Activated CD8-positive, alpha-beta T cell treated with anti-CD3 and anti-CD28 coated beads, Interleukin-2, amount 10 ng/mL, durations not matched to agents 7 days and 5 days (primary cell): ENCODE measurements at regions of chr3 and their contacts with region 1.

Region 1: DNA sequence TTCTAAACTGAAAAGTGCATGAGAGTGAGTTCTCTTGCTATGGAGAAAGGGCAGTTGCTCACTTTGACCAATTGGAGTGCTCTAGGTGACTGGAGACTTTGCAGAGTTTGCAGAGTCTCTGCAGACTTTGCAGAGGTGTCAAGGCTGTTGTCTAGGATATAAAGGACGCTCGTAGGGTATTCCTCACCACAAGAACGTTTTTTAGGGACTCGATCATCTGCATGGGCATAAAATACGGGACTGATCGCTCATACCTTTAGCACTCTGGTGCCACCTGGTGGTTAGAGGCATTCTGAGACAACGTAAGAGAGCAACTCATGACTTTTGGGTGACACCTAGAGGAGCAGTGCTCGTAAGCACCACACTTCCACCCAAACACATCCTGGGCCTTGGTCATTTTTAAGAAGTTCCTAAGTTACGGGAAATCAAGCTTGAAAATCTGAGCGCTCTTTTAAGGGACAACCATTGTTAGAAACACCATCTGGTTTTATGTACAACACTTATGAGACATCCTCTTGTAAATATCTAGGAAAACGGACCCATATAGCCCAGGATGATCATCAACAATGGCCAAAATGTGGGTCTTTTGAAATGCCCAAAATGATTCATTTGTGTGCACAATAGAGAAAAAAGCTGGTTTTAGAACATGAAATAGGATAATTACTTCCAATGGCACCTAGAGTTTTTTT is 51.6 kb upstream of the XCR1 start:
- DNase-seq: peak; percentile 95
- ATAC-seq: peak; percentile 99
- H3K4me3 Mint-ChIP-seq: peak overlapping the region; percentile 29
- H3K27ac Mint-ChIP-seq: peak overlapping the region; percentile 58
- H3K4me1 Mint-ChIP-seq: peaks cover 70% of the 10 kb centered on the region
- H3K27me3 Mint-ChIP-seq: no peaks in the 10 kb centered on the region

Region 2: DNA sequence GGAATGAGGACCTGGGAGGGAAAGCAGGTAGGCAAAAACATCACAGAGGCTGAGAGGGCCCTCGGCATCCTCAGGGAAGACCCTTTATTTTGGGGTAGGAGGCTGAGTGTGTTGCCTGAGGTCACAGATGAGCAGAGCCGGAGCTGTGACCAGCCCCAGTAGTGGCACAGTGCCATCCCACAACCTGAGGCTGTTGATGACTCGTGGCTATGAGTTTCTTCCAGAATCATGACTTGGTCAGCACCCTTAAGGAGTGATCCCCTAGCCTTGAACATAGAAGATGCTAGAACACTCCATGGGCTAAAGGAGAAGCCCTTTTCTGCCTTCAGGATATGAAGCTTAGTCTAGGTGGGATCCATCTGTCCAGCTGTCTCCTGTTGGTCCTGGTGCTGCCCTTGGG is 155.1 kb before region 1 on chr3:
- CTCF ChIA-PET with region 1: interaction called, 87 read pairs
- POLR2A ChIA-PET with region 1: no interaction called
- DNase-seq: no peak
- ATAC-seq: no peak
- H3K4me3 Mint-ChIP-seq: no peak overlapping the region
- H3K27ac Mint-ChIP-seq: no peak overlapping the region
- H3K4me1 Mint-ChIP-seq: peaks cover 14% of the 10 kb centered on the region
- H3K27me3 Mint-ChIP-seq: no peaks in the 10 kb centered on the region

Region 3: GRCh38 chr3:45958321-45958791 is 120.5 kb before region 1 on chr3:
- CTCF ChIA-PET with region 1: interaction called, 171 read pairs
- POLR2A ChIA-PET with region 1: no interaction called
- DNase-seq: no peak
- ATAC-seq: no peak
- H3K4me3 Mint-ChIP-seq: no peak overlapping the region
- H3K27ac Mint-ChIP-seq: peak overlapping the region; percentile 69
- H3K4me1 Mint-ChIP-seq: peaks cover 76% of the 10 kb centered on the region
- H3K27me3 Mint-ChIP-seq: no peaks in the 10 kb centered on the region

Region 4: GRCh38 chr3:46010519-46011113 is 68.2 kb before region 1 on chr3:
- CTCF ChIA-PET with region 1: interaction called, 11 read pairs
- POLR2A ChIA-PET with region 1: no interaction called
- DNase-seq: no peak
- ATAC-seq: no peak
- H3K4me3 Mint-ChIP-seq: no peak overlapping the region
- H3K27ac Mint-ChIP-seq: peak overlapping the region; percentile 54
- H3K4me1 Mint-ChIP-seq: peaks cover 52% of the 10 kb centered on the region
- H3K27me3 Mint-ChIP-seq: peaks cover 3% of the 10 kb centered on the region

Region 5: GRCh38 chr3:46105306-46105919 is 26.6 kb after region 1 on chr3:
- CTCF ChIA-PET with region 1: interaction called, 13 read pairs
- POLR2A ChIA-PET with region 1: no interaction called
- DNase-seq: no peak
- ATAC-seq: no peak
- H3K4me3 Mint-ChIP-seq: no peak overlapping the region
- H3K27ac Mint-ChIP-seq: peak overlapping the region; percentile 70
- H3K4me1 Mint-ChIP-seq: peaks cover 89% of the 10 kb centered on the region
- H3K27me3 Mint-ChIP-seq: no peaks in the 10 kb centered on the region

Region 6: GRCh38 chr3:46368569-46368968 is 289.7 kb after region 1 on chr3:
- CTCF ChIA-PET with region 1: interaction called, 287 read pairs
- POLR2A ChIA-PET with region 1: no interaction called
- DNase-seq: peak; percentile 85
- ATAC-seq: peak; percentile 71
- H3K4me3 Mint-ChIP-seq: peak overlapping the region; percentile 1
- H3K27ac Mint-ChIP-seq: peak overlapping the region; percentile 78
- H3K4me1 Mint-ChIP-seq: peaks cover 70% of the 10 kb centered on the region
- H3K27me3 Mint-ChIP-seq: no peaks in the 10 kb centered on the region